Activated naive CD4-positive, alpha-beta T cell treated with anti-CD3 and anti-CD28 coated beads for 36 hours (primary cell): ENCODE measurements at regions of chr12 and their contacts with region 1.

Region 1: GRCh38 chr12:9673404-9674225 is 4.1 kb downstream of the CLEC2D start:
- DNase-seq: peak; percentile 84
- H3K4me3 Mint-ChIP-seq: peak overlapping the region; percentile 90
- H3K27ac Mint-ChIP-seq: peak overlapping the region; percentile 97
- H3K4me1 Mint-ChIP-seq: peaks cover 35% of the 10 kb centered on the region
- H3K27me3 Mint-ChIP-seq: no peaks in the 10 kb centered on the region

Region 2: GRCh38 chr12:9588749-9589148 is 84.9 kb before region 1 on chr12:
- CTCF ChIA-PET with region 1: no interaction called
- intact Hi-C with region 1: no loop called
- DNase-seq: no peak
- H3K4me3 Mint-ChIP-seq: no peak overlapping the region
- H3K27ac Mint-ChIP-seq: no peak overlapping the region
- H3K4me1 Mint-ChIP-seq: no peaks in the 10 kb centered on the region
- H3K27me3 Mint-ChIP-seq: no peaks in the 10 kb centered on the region

Region 3: GRCh38 chr12:9732921-9733461 is 59.4 kb after region 1 on chr12 and contains the start of gene CLECL1:
- CTCF ChIA-PET with region 1: no interaction called
- intact Hi-C with region 1: loop called (anchors 2 kb)
- DNase-seq: peak; percentile 44
- H3K4me3 Mint-ChIP-seq: peak within 1 kb of the TSS; percentile 63
- H3K27ac Mint-ChIP-seq: peak within 1 kb of the TSS; percentile 59
- H3K4me1 Mint-ChIP-seq: peaks cover 54% of the 10 kb centered on the region
- H3K27me3 Mint-ChIP-seq: no peaks in the 10 kb centered on the region
- total RNA-seq, gene CLECL1: 1.7 to 1.9 TPM

Region 4: DNA sequence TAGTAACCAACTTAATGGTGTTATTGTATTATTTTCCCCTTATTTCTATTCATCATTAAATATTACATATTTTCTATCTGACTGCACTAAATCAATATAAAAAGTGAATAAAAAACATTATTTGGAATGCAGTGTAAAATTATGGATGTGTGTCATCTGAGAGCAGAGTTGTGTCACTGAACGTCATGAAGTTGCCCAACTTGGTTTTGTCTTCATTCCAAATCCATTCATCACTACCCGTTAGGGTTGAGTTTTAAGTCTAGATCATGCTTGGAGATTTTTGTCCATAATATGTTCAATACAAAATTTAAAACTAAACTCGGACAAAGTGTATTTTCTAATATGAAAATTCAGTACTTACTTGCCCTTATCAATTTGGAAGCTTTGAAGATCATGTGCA is 169.8 kb after region 1 on chr12:
- CTCF ChIA-PET with region 1: no interaction called
- intact Hi-C with region 1: no loop called
- DNase-seq: no peak
- H3K4me3 Mint-ChIP-seq: no peak overlapping the region
- H3K27ac Mint-ChIP-seq: no peak overlapping the region
- H3K4me1 Mint-ChIP-seq: no peaks in the 10 kb centered on the region
- H3K27me3 Mint-ChIP-seq: no peaks in the 10 kb centered on the region

Region 5: GRCh38 chr12:10268037-10268436 is 594.4 kb after region 1 on chr12:
- CTCF ChIA-PET with region 1: no interaction called
- intact Hi-C with region 1: no loop called
- DNase-seq: no peak
- H3K4me3 Mint-ChIP-seq: no peak overlapping the region
- H3K27ac Mint-ChIP-seq: no peak overlapping the region
- H3K4me1 Mint-ChIP-seq: no peaks in the 10 kb centered on the region
- H3K27me3 Mint-ChIP-seq: no peaks in the 10 kb centered on the region